PC-3 (cell line): ENCODE measurements at regions of chr1 and their contacts with region 1.

Region 1: GRCh38 chr1:36385410-36386257 is at the start of gene STK40:
- DNase-seq: peak; percentile 99
- ATAC-seq: peak; percentile 82
- H3K4me3 ChIP-seq: peak within 1 kb of the TSS; percentile 97
- H3K27ac ChIP-seq: peak within 1 kb of the TSS; percentile 96
- H3K4me1 ChIP-seq: peaks cover 21% of the 10 kb centered on the region
- H3K27me3 ChIP-seq: no peaks in the 10 kb centered on the region
- CTCF ChIP-seq: no peak
- total RNA-seq, gene STK40: 14.4 and 15.9 TPM in 2 replicates

Region 2: GRCh38 chr1:36342481-36343478 is 42.9 kb before region 1 on chr1:
- CTCF ChIA-PET with region 1: interaction called, 8 read pairs
- POLR2A ChIA-PET with region 1: interaction called, 4 read pairs
- intact Hi-C with region 1: loop called (anchors 5 kb)
- DNase-seq: peak; percentile 87
- ATAC-seq: peak; percentile 84
- H3K4me3 ChIP-seq: no peak overlapping the region
- H3K27ac ChIP-seq: peak overlapping the region; percentile 82
- H3K4me1 ChIP-seq: peaks cover 15% of the 10 kb centered on the region
- H3K27me3 ChIP-seq: no peaks in the 10 kb centered on the region
- CTCF ChIP-seq: peak; percentile 93

Region 3: DNA sequence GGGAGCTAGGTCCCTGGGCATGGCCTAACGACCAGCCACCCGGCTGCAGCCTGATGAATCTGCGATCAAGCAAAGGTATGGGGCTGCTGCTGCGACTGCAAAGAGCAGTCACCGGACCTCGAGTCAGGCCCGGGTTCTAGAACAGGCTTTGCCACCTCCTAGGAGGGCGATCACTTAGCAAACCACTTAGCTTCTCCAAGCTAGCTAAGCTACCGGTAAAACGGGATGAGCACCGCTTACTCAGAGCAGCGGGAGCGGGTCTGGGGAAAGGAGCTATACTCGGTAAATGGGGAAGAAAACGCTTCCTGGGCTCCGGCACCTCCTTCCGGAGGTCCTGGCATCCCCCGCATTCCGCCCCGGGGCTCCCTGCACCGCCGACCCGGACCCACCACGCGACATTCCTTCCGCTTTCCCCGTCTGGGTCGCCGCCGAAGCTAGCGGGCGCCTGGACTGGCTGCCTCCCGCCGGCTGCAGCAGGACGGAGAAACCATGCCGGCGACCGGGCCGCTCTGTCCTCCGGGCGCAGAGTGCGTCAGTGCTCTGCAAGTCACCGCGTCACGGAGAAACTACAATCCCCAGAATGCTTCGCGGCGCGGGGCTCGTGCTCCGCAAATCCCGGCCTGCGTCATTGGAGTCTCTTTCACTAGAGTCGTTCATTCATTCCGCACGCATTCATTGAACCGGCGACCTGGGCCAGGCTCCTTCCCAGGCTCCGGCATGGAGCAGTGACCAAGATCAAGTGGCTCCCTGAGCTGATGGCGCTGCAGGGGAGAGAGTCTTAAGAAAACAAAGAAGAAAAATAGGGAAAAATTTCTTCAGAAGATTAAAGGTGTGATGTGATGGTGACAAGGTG is 12.0 kb after region 1 on chr1 and contains the start of gene LSM10:
- CTCF ChIA-PET with region 1: no interaction called
- POLR2A ChIA-PET with region 1: interaction called, 4 read pairs
- intact Hi-C with region 1: loop called (anchors 1 kb)
- DNase-seq: peak; percentile 96
- ATAC-seq: peak; percentile 95
- H3K4me3 ChIP-seq: peak within 1 kb of the TSS; percentile 93
- H3K27ac ChIP-seq: peak within 1 kb of the TSS; percentile 56
- H3K4me1 ChIP-seq: peaks cover 14% of the 10 kb centered on the region; the same call in 1 of the 2 replicates
- H3K27me3 ChIP-seq: no peaks in the 10 kb centered on the region
- CTCF ChIP-seq: no peak
- total RNA-seq, gene LSM10: 19.2 and 35.2 TPM in 2 replicates

Region 4: DNA sequence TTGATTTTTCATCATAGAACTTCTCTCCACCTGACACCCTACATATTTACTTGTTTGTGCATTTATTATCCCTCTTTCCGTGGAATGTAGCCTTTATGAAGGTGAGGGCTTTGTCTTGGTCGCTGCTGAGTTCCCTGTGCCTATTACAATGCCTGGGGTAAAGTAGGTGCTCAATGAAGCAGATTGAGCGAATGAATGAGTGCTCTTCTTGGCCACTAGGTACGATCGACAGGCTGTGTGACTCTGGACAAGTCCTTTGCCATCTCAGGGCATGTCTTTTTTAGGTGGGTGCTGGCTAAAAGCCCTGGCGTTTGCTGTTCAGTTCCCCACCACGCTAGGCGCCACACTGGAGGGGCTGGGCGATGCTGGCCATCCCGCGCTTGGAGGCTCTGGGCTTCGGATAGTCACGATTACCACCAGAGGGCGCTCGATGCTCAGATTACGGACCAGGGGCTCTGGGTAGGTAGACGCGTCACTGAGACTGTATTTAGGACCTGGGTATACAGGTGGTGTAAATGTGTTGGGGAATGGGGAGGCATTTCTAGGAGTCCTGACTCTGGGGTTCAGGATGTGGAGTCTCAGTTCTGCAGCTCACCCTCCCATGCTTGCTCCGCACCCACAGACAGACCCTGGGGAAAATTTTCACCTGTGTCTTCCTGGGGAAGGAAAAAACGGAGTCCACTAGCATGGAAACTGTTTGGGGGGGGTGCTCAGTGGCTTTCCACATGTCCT is 168.1 kb after region 1 on chr1:
- CTCF ChIA-PET with region 1: no interaction called
- POLR2A ChIA-PET with region 1: no interaction called
- intact Hi-C with region 1: no loop called
- DNase-seq: peak; percentile 83
- ATAC-seq: peak; percentile 97
- H3K4me3 ChIP-seq: no peak overlapping the region
- H3K27ac ChIP-seq: no peak overlapping the region
- H3K4me1 ChIP-seq: no peaks in the 10 kb centered on the region
- H3K27me3 ChIP-seq: peaks cover 53% of the 10 kb centered on the region
- CTCF ChIP-seq: peak; percentile 91

Region 5: DNA sequence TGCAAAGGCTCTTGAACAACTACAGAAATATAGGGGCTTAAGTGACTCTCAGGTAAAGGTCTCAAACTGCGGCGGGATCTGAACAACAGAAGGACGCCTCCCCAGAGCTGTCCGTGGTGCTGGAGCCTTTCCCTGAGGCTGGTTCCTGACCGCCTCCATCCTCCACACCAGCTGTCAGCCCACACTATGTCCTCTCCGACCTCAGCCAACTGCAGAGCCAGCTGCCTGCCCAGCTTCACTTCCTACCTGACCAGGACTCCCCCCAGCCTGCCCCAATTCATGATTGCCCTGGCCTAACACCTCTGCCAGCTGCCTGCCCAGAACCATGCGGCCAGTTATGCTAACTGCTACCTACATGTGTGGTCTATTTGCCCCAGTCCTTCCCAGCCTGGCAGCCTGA is 1025.2 kb after region 1 on chr1:
- CTCF ChIA-PET with region 1: interaction called, 15 read pairs
- POLR2A ChIA-PET with region 1: no interaction called
- intact Hi-C with region 1: no loop called
- DNase-seq: peak; percentile 30
- ATAC-seq: no peak
- H3K4me3 ChIP-seq: no peak overlapping the region
- H3K27ac ChIP-seq: no peak overlapping the region
- H3K4me1 ChIP-seq: no peaks in the 10 kb centered on the region
- H3K27me3 ChIP-seq: peaks cover 31% of the 10 kb centered on the region; the same call in 1 of the 2 replicates
- CTCF ChIP-seq: no peak